ENCODE measurements at regions of chr7 and their contacts with region 1.

Region 1: DNA sequence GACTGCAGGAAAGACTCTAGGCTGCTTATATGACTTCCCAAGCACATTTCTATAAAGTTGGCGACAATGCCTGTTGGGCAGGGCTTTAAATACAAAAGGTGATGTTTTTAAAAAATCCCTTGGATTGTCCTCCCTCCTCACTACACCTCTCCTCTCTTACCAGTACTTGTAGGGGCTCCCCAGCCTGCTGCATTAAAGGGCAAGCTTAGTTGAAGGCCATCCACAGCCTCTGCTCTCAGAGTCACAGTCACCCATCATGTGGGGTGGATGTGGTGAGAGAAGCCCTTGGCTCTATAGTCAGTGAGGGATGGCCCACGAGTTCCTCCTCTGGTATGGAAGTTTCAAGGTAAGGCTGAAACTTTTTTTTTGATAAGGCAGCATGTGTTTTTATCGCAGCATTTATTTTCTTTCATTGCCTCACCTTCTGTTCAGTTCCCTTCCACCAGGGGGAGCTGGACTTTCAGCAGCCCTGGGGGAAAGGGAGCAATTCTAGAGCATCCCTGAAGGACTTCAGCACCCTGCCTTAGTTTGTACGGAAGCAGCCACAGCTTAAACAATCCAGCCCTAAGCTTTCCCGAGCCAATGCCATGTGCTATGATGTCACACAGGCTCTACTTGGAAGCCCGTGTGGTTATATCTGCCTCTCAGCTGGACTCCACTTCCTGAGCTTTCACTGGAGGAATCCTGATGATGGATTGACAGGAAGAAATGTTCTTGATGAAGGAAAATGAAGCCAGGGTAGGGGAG is 131.9 kb downstream of the CALCR start:
- DNase-seq: peak; percentile 19
- H3K4me3 ChIP-seq: no peak overlapping the region
- H3K27ac ChIP-seq: no peak overlapping the region
- H3K4me1 ChIP-seq: no peaks in the 10 kb centered on the region
- H3K27me3 ChIP-seq: peaks cover 8% of the 10 kb centered on the region
- CTCF ChIP-seq: peak; percentile 82 to 86

Region 2: DNA sequence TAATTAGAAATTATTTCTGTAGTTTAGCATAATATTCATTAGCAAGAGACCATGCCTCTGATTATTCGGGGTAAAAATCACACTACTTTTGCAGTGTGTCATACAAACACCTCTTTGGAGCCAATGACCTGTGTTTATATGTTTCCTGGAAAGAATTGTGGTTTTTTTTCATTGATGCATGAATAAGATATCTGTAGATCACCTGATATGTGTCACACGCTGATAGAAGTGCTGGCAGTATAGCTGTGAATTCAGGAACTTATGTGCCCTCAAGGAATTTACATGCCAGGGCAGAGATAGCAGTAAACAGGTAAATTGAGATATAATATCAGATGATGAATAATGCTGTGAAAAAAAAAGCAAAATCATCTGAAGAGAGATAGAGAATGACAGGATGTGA is 92.3 kb before region 1 on chr7:
- CTCF ChIA-PET with region 1: no interaction called
- dilution Hi-C with region 1: loop called (anchors 5 kb)
- in situ Hi-C with region 1: no loop called
- intact Hi-C with region 1: no loop called
- DNase-seq: peak; percentile 26
- H3K4me3 ChIP-seq: no peak overlapping the region
- H3K27ac ChIP-seq: no peak overlapping the region
- H3K4me1 ChIP-seq: no peaks in the 10 kb centered on the region
- H3K27me3 ChIP-seq: no peaks in the 10 kb centered on the region
- CTCF ChIP-seq: no peak

Region 3: GRCh38 chr7:93365341-93365740 is 77.3 kb before region 1 on chr7:
- CTCF ChIA-PET with region 1: no interaction called
- dilution Hi-C with region 1: no loop called
- in situ Hi-C with region 1: no loop called
- intact Hi-C with region 1: no loop called
- DNase-seq: no peak
- H3K4me3 ChIP-seq: no peak overlapping the region
- H3K27ac ChIP-seq: no peak overlapping the region
- H3K4me1 ChIP-seq: no peaks in the 10 kb centered on the region
- H3K27me3 ChIP-seq: no peaks in the 10 kb centered on the region
- CTCF ChIP-seq: no peak

Region 4: DNA sequence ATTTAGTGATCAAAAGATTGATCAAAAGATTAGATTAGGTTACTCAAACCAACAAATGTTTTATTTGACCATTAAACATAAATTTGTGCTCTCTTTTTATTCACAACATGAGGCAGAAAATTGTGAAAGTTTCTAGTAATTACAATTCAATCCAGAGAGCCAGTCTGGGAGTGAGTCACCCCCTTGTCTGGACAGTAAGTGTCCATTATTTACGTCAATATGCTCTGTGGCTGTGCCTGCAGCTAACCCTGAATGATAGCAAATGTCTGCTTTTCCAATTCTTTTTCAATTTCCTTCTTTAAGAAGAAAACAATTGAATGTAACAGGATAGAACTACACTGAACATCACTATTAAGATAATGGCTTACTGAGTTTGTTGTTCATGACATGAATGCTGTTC is 506.8 kb after region 1 on chr7:
- CTCF ChIA-PET with region 1: no interaction called
- dilution Hi-C with region 1: no loop called
- in situ Hi-C with region 1: no loop called
- intact Hi-C with region 1: no loop called
- DNase-seq: peak; percentile 3
- H3K4me3 ChIP-seq: no peak overlapping the region
- H3K27ac ChIP-seq: no peak overlapping the region
- H3K4me1 ChIP-seq: no peaks in the 10 kb centered on the region
- H3K27me3 ChIP-seq: no peaks in the 10 kb centered on the region
- CTCF ChIP-seq: no peak